ENCODE measurements at regions of chr9 and their contacts with region 1.

Region 1: GRCh38 chr9:84953797-84954705 is 284.5 kb downstream of the NTRK2 start:
- DNase-seq: peak; percentile 74 to 97 (median 88)

Region 2: GRCh38 chr9:84397151-84397728 is 556.8 kb before region 1 on chr9:
- intact Hi-C with region 1: loop called (anchors 10 kb)
- DNase-seq: peak; percentile 60 to 96 (median 74)

Region 3: GRCh38 chr9:84697509-84698114 is 256.4 kb before region 1 on chr9:
- intact Hi-C with region 1: loop called (anchors 1 kb)
- DNase-seq: peak; percentile 28 to 95 (median 70)

Region 4: GRCh38 chr9:84839541-84839940 is 114.5 kb before region 1 on chr9:
- intact Hi-C with region 1: no loop called
- DNase-seq: peak in 9 of 10 donors; percentile 28 to 95 (median 70)

Region 5: GRCh38 chr9:85009251-85009650 is 55.2 kb after region 1 on chr9:
- intact Hi-C with region 1: no loop called
- DNase-seq: no peak

Region 6: DNA sequence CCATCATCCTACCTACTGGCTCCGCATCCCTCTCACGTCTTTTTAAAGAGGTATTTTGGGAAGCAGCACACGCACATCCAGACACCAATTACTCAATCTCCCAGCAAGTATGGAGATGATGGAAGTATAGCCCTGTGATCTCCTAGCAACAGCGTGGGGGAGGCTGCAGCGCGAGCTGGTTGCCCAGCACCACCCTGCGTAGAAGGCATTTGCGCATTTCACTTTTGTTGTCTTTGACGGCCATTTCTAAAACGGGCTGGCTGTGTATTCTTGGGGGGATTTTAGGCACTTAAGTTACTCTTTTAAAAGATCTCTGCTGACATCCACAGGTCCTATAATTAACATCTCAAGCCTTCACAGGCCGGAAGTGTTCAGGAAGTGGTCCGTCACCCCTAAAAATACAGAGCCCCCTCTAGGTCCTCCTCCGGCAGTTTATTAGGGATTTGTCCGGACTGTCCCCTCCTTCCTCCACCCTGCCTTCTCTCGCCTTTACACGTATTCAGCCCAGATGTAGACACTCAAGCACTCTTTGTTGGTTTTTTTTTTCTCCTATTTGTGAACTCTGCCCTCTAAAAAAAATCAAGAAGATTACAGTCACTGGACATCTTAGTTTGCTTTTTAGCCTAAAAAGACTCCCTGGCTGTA is 86.9 kb after region 1 on chr9:
- intact Hi-C with region 1: loop called (anchors 10 kb)
- DNase-seq: peak; percentile 65 to 98 (median 82)